ENCODE measurements at regions of chr2 and their contacts with region 1.

Region 1: GRCh38 chr2:189287982-189288521 is 108.5 kb upstream of the COL5A2 start:
- DNase-seq: peak; percentile 31 to 85
- ATAC-seq: peak; percentile 76 to 80; a peak in 5 of 6 replicates
- H3K4me3 ChIP-seq: no peak overlapping the region
- H3K27ac ChIP-seq: peak overlapping the region; percentile 70 to 80
- H3K4me1 ChIP-seq: peaks cover 45% of the 10 kb centered on the region
- CTCF ChIP-seq: peak; percentile 88
- EP300 ChIP-seq: no peak
- POLR2A ChIP-seq: no peak
- RAD21 ChIP-seq: peak; percentile 96 to 98

Region 2: DNA sequence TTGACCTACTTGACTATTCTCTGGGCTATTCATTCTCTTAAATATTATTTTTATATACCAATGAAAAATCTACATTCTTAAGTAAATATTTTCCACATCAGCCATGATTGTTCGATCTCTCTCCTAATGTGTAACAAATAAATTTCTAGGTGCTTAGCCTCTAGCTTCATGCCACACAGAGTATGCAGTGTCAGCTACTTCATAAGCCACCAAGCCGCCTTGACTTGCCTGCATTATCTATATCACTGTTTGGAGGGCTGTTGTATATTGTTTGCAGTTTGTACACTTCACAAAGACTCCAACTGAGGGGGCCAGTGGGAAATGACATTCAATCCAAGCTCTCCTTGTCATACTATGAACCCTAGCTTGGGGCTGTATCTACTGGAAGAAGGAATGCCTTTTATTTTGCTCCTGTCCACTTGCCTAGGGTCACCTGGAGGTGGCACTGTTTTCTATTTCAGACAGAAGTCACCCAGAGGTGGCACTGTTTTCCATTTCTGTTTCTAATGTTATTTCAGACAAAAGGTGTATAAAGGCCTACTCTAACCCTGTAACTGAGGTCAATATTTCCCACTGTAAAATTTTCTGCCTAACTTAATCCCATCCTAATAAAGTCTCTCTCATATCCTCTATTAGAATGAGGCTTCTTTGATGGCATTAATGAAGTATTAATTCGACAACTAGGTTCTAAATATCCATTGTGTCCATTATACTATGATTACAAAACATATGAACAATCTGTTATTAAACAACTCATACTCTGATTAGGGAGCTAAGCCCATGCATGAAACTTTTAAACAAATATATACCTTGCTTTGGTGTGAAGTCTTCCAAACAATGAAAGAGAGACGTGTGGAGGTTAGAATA is 144.9 kb before region 1 on chr2:
- CTCF ChIA-PET with region 1: interaction called, 16 read pairs
- POLR2A ChIA-PET with region 1: no interaction called
- DNase-seq: peak; percentile 31 to 80
- ATAC-seq: peak; percentile 91 to 93
- H3K4me3 ChIP-seq: no peak overlapping the region
- H3K27ac ChIP-seq: peak overlapping the region in 1 of 2 experiments; percentile 48; a peak in 1 of 6 replicates
- H3K4me1 ChIP-seq: peaks cover 33% of the 10 kb centered on the region
- CTCF ChIP-seq: peak; percentile 83
- EP300 ChIP-seq: no peak
- POLR2A ChIP-seq: no peak
- RAD21 ChIP-seq: peak; percentile 65 to 82

Region 3: DNA sequence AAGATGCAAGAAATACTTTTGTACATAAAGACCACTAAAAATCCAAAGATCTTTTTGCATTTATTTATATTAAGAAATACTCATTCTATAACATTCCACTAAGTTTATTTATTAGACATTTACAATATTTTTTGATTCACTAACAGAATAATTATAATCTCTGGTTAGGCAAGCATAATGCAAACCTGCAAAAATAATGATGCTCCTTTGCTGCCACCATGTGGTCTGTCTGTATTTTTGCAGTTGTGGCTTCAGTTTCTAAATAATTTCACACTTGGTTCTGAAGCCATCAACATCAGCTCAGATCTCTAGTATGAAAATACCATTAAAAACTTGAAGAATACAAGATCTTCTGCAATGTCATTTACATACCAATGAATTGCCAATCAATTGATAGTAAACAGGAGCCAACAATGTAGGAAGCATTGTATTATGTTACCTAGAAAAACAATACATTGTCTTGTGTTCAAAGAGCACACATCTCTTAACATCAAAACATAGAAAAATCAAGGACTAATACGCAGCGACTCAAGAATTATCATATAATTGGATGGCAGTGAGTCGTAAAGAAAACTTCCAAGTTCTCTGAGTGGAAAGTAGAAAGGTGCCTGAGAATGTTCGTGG is 124.4 kb after region 1 on chr2:
- CTCF ChIA-PET with region 1: interaction called, 12 read pairs
- POLR2A ChIA-PET with region 1: no interaction called
- DNase-seq: peak; percentile 12 to 53
- ATAC-seq: peak in 1 of 2 experiments; percentile 77; a peak in 3 of 6 replicates
- H3K4me3 ChIP-seq: no peak overlapping the region
- H3K27ac ChIP-seq: peak overlapping the region; percentile 61 to 66; a peak in 4 of 6 replicates
- H3K4me1 ChIP-seq: peaks cover 33% of the 10 kb centered on the region
- CTCF ChIP-seq: peak; percentile 94
- EP300 ChIP-seq: no peak
- POLR2A ChIP-seq: no peak
- RAD21 ChIP-seq: peak; percentile 95 to 97